K562 (cell line): ENCODE measurements at regions of chr17 and their contacts with region 1.

Region 1: DNA sequence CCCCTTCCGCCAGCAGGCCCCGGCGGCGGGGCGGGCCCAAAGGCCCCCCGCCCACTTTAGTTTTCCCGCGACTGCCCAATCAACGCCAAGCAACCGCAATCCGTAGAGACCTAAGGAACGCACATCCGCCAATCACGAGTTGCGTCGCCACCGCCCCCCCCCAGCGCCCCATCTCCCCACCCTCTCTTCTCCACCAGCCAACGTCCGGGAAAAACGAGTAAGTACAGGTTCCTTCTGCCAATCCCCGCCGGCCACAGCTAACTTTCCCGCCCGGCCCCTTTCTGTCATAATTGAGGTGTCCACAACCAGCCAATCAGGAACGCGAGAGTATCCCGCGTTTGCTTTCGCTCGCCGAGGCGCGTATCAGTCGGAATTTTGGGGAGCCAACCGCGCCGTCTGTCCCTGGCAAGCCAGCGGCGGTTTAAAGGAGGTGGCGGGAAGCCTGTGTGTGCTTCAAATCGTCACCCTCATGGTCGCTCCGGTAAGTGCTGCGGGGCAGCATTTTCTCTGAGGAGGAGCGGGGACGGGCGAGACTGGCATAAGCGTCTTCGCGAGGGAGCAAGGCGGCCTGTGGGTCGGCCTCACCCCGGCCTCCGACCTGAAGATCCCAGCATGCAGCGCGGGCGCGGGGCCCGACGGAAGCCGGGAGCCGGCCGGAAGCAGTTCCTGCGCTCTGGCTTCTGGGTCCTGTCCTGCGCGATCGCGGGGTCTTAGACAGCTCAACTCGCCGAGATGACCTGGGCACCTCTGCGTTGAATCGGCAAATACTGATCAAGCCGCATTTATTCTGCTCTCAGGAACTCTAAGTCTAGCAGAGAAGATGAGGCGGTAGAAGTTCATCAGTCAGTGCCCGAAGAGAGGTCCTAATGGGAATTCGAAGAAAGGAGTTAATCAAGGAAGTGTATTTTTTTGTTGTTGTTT is at the start of gene MIS12:
- DNase-seq: peak; percentile 92 to 97 (median 95)
- ATAC-seq: peak; percentile 97
- H3K4me3 ChIP-seq: peak within 1 kb of the TSS; percentile 97
- H3K27ac ChIP-seq: peak within 1 kb of the TSS; percentile 100
- H3K4me1 ChIP-seq: peaks cover 5 to 8% of the 10 kb centered on the region in 2 experiments; a peak in 2 of 5 replicates
- H3K27me3 ChIP-seq: no peaks in the 10 kb centered on the region
- CTCF ChIP-seq: no peak
- EP300 ChIP-seq: peak; percentile 8; the same call in 1 of the 2 replicates
- POLR2A ChIP-seq: peak; percentile 97
- RAD21 ChIP-seq: no peak
- polyA plus RNA-seq, gene MIS12: 13.5 to 23.8 TPM

Region 2: DNA sequence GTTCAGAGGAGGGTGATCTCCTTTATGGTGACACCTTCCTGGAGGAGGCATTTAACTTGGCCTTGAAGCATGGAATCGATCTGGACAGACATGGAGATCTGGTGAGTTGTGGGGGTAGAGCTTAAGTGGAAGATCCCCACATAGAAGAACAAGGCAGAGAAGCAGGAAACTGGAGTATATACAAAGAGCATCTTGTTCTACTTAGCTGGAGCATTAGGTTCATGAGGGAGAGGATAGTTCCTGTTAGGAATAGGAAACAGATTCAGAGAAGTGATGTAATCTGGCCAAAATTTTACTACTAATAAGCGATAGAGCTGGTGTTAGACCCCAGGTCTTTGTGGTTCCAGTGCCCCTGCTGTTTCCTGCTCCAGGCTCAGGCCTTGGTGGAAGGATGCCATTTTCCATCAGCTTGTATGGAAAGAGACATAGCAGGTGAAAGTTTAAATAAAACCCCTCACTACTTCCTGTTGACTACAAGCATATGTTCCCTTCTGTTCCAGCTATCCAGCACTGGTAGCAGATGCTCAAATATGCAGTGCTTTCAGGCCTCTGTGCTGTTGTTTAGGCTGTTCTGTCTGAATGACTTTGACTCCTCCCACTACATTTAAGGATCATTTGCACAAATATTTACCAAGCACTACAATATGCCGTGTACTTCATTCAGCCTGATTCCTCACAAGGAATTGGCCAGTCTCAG is 57.1 kb before region 1 on chr17:
- CTCF ChIA-PET with region 1: no interaction called
- POLR2A ChIA-PET with region 1: no interaction called
- in situ Hi-C with region 1: no loop called
- intact Hi-C with region 1: no loop called
- DNase-seq: no peak
- ATAC-seq: no peak
- H3K4me3 ChIP-seq: no peak overlapping the region
- H3K27ac ChIP-seq: no peak overlapping the region
- H3K4me1 ChIP-seq: no peaks in the 10 kb centered on the region
- H3K27me3 ChIP-seq: no peaks in the 10 kb centered on the region
- CTCF ChIP-seq: no peak
- EP300 ChIP-seq: no peak
- POLR2A ChIP-seq: no peak
- RAD21 ChIP-seq: no peak

Region 3: DNA sequence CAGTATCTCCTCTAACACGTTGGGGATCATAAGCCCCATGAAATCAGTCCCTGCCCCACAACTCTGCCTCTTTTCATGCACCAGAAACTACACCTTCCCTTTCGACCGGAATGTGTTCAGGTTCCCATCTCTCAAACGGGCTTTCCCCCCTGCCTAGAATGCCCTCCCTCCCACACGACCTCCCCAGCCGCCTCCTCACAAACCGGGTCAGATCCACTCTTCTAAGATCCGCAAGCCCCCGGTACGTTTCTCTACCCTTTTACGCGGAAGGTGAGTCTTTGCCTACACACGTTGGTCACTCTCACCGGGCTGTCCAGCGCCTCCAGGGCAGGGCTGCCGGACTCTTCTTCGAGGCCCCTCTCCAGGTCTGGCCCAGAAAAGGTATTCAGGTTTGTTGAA is 18.4 kb before region 1 on chr17:
- CTCF ChIA-PET with region 1: no interaction called
- POLR2A ChIA-PET with region 1: interaction called, 15 read pairs
- in situ Hi-C with region 1: no loop called
- intact Hi-C with region 1: loop called (anchors 1 kb)
- DNase-seq: peak in 3 of 4 experiments; percentile 11 to 19 (median 11)
- ATAC-seq: peak; percentile 56
- H3K4me3 ChIP-seq: peak overlapping the region; percentile 97
- H3K27ac ChIP-seq: peak overlapping the region; percentile 70
- H3K4me1 ChIP-seq: peaks cover 4 to 6% of the 10 kb centered on the region in 2 experiments; a peak in 4 of 5 replicates
- H3K27me3 ChIP-seq: no peaks in the 10 kb centered on the region
- CTCF ChIP-seq: no peak
- EP300 ChIP-seq: no peak
- POLR2A ChIP-seq: no peak
- RAD21 ChIP-seq: no peak